BJ (cell line): ENCODE measurements at regions of chr3 and their contacts with region 1.

Region 1: DNA sequence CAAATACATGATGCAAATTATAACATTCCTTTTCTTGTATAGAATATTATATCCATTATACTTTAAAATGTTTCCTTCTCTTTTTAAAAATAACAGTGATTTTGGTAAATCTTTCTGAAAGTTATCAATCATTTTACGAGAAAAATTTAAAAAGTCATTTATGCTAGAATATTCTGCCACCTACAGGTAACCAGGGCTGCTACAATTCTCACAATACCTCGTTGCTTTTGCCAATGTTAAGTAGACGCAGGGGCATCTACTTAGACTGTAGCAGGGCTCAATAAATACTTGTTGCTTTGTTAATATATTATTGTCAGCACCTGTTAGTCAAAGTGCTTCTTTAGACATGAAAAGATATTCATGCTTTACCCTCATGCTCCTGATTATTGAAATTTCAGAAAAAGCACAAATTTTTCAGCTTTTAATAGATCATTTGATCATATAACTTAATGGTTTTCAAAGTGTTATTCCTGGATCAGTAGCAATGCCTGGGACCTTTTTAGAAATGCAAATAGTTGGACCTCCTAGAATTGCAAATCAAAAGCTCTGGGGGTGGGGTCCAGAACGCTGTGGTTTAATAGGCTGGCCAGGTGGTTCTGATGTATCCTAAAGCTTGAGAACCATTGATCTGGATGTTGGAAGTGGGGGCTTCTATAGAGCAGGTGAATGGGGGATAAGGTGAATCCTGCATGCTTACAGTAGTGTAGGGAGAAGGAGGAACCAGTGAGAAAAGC is 223.6 kb upstream of the PDZRN3 start:
- DNase-seq: no peak
- H3K4me3 ChIP-seq: no peak overlapping the region
- H3K27me3 ChIP-seq: no peaks in the 10 kb centered on the region; the same call in 1 of the 2 replicates
- CTCF ChIP-seq: peak; percentile 70

Region 2: DNA sequence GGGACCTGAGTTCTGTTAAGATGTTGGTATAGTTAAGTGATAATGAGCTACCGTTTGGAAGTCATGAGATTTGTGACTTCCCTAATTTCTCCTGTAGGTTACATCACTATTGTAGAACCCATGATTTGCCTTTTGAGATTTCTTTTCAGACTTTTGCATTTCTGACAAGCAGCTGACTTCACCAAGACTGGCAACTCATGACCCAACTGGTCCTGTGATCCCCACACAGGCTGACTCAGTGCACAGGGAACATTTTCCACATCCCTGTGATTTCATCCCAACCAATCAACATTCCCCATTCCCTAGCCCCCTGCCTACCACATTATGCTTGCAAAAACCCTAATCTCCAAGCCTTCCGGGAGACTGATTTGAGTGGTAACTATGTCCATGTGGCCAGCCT is 18.5 kb after region 1 on chr3:
- CTCF ChIA-PET with region 1: interaction called, 12 read pairs
- POLR2A ChIA-PET with region 1: no interaction called
- DNase-seq: no peak
- H3K4me3 ChIP-seq: no peak overlapping the region
- H3K27me3 ChIP-seq: 0 out of 2 replicates have a peak, but pooled peaks cover 2% of the 10 kb centered on the region
- CTCF ChIP-seq: no peak

Region 3: GRCh38 chr3:73950865-73951558 is 102.7 kb after region 1 on chr3:
- CTCF ChIA-PET with region 1: no interaction called
- POLR2A ChIA-PET with region 1: no interaction called
- DNase-seq: no peak
- H3K4me3 ChIP-seq: no peak overlapping the region
- H3K27me3 ChIP-seq: no peaks in the 10 kb centered on the region
- CTCF ChIP-seq: no peak